HepG2 (cell line): ENCODE measurements at regions of chr20 and their contacts with region 1.

Region 1: DNA sequence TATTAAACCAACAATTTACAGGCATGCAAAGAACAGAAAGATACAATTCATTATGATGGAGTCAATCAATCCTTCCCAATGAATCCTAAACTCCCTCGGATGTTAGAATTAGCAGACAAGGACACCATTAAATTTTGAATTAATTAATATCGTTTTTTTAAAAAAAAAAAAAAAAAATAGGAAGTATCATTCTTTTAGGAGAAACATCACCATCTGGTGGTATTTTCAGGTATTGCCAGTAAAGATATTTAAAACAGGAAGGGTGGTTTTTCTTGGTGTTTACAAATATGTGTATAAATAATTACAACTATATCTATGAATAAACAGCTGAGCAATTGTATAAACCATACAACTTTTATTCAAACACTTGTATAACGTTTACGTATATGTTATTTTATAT is 564.4 kb downstream of the HAO1 start:
- DNase-seq: peak; percentile 29
- ATAC-seq: no peak
- H3K4me3 ChIP-seq: no peak overlapping the region
- H3K27ac ChIP-seq: no peak overlapping the region
- H3K4me1 ChIP-seq: no peaks in the 10 kb centered on the region
- H3K27me3 ChIP-seq: no peaks in the 10 kb centered on the region
- CTCF ChIP-seq: 0 out of 2 replicates have a peak, but pooled peaks have one; percentile 29
- EP300 ChIP-seq: no peak
- POLR2A ChIP-seq: no peak
- RAD21 ChIP-seq: no peak

Region 2: DNA sequence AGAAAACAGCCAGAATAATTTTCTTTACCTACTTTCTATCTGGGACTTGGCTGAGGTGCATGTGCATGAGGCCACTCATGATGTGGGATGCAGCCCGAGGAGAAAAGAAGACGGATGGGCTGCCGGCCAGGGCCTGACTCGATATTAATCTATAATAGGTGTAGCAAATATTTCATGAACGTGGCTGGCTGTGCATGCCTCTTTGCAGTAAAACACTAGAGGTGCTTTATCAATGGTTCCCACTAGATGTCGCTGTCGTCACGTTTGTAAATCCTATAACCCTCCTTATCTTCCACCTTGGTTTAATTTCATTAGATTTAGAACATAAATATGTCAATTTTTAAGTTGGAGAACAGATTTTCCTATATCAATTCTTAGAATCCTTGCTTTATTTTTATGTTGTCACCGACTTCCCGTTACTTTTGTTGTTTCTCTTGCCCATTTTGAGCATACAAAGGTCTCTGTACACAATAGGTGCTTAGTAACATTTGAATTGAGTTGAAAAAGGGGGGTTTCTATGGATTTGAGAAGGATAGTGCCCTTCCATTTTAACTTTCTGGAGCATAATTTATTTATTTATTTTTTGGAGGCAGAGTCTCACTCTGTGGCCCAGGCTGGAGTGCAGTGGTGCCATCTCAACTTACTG is 1233.4 kb before region 1 on chr20:
- CTCF ChIA-PET with region 1: no interaction called
- POLR2A ChIA-PET with region 1: no interaction called
- in situ Hi-C with region 1: no loop called
- intact Hi-C with region 1: loop called (anchors 2 kb)
- DNase-seq: peak; percentile 70
- ATAC-seq: peak; percentile 89
- H3K4me3 ChIP-seq: no peak overlapping the region
- H3K27ac ChIP-seq: no peak overlapping the region
- H3K4me1 ChIP-seq: no peaks in the 10 kb centered on the region
- H3K27me3 ChIP-seq: no peaks in the 10 kb centered on the region
- CTCF ChIP-seq: peak; percentile 87
- EP300 ChIP-seq: no peak
- POLR2A ChIP-seq: no peak
- RAD21 ChIP-seq: no peak; the same call in 1 of the 2 replicates